Activated B cell treated with CpG ODN at 0.5 μM for 24 hours (primary cell): ENCODE measurements at regions of chr18 and their contacts with region 1.

Region 1: GRCh38 chr18:21194871-21195771 is 46.9 kb upstream of the GREB1L start:
- DNase-seq: no peak
- ATAC-seq: peak; percentile 28
- H3K4me3 Mint-ChIP-seq: no peak overlapping the region
- H3K27ac Mint-ChIP-seq: no peak overlapping the region
- H3K4me1 Mint-ChIP-seq: no peaks in the 10 kb centered on the region
- H3K27me3 Mint-ChIP-seq: peaks cover 8% of the 10 kb centered on the region
- CTCF ChIP-seq: peak; percentile 37

Region 2: GRCh38 chr18:21257386-21257785 is 62.3 kb after region 1 on chr18:
- CTCF ChIA-PET with region 1: no interaction called
- POLR2A ChIA-PET with region 1: no interaction called
- intact Hi-C with region 1: no loop called
- DNase-seq: no peak
- ATAC-seq: no peak
- H3K4me3 Mint-ChIP-seq: no peak overlapping the region
- H3K27ac Mint-ChIP-seq: no peak overlapping the region
- H3K4me1 Mint-ChIP-seq: no peaks in the 10 kb centered on the region
- H3K27me3 Mint-ChIP-seq: peaks cover 6% of the 10 kb centered on the region
- CTCF ChIP-seq: no peak

Region 3: GRCh38 chr18:21444465-21445023 is 249.4 kb after region 1 on chr18:
- CTCF ChIA-PET with region 1: interaction called, 8 read pairs
- POLR2A ChIA-PET with region 1: no interaction called
- intact Hi-C with region 1: loop called (anchors 2 kb)
- DNase-seq: no peak
- ATAC-seq: no peak
- H3K4me3 Mint-ChIP-seq: no peak overlapping the region
- H3K27ac Mint-ChIP-seq: no peak overlapping the region
- H3K4me1 Mint-ChIP-seq: no peaks in the 10 kb centered on the region
- H3K27me3 Mint-ChIP-seq: peaks cover 21% of the 10 kb centered on the region
- CTCF ChIP-seq: no peak

Region 4: DNA sequence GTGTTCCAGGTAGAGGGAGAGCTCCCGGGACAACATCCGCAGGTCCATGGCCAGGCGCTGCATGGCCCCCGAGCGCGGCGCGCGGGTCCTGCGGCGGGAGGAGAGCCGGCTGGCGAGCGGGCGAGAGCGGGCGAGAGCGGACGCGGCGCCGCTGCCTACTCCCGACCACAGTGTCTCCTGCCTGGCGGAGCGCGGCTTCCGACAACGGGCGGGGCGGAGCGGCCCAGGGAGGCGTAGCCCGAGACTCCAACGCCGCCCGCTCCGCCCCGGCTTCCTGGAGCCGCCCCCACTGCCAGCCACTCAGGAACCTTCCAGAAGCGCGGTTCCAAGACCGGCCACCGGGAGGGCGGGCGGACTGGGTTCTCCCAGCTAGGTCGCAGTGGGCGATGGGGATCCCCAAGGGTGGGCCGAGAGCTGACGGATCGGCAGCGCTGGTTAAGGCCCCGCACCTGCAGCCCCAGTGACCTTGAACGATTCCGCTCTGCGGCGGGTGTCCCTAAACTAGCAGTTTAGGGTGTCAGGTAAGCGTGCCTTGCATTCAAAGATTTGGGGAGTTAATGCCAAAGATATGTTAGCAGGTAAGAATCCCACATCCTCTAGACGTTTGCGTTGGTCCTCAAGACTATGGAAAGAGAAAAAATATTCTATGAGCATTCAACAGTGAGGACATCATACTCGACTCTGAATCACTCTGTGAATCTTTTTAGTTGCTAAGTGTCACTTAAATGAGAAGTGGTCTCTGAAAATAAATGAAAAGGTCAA is 509.7 kb after region 1 on chr18 and contains the start of gene ABHD3:
- CTCF ChIA-PET with region 1: no interaction called
- POLR2A ChIA-PET with region 1: no interaction called
- intact Hi-C with region 1: no loop called
- DNase-seq: peak; percentile 89
- ATAC-seq: peak; percentile 92
- H3K4me3 Mint-ChIP-seq: peak within 1 kb of the TSS; percentile 95
- H3K27ac Mint-ChIP-seq: peak within 1 kb of the TSS; percentile 94
- H3K4me1 Mint-ChIP-seq: peaks cover 25% of the 10 kb centered on the region
- H3K27me3 Mint-ChIP-seq: no peaks in the 10 kb centered on the region
- CTCF ChIP-seq: no peak
- total RNA-seq, gene ABHD3: 22.2 and 29.5 TPM in 2 replicates

Region 5: DNA sequence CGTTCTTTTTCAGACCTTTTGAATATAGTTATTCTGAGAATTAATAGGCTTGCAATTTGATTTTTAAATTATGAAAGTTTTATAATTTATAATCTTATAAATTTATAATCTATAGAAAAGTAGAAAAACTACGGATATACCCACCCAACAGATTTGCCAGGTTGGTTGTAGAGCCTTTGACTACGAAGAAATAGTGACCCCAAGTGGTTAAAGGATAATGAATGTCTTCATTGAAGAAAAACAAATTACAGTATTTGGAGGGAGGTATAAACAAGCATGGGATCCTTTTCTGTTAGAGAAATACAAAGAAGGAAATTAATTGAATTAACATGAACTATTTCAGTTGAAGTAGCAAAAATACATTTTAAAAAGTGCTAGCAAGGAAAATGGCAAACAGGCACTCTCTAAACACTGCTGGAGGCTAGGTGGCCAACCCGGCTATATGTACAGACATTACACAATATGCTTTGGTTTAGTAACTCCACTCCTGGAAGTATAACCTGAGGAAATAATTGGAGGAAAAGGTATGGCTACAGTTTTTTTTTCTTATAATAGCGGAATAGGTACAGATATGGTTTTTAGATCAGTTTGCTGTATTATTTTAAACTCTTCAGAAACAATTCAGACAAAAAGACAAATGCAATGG is 656.3 kb after region 1 on chr18:
- CTCF ChIA-PET with region 1: interaction called, 10 read pairs
- POLR2A ChIA-PET with region 1: no interaction called
- intact Hi-C with region 1: loop called (anchors 1 kb)
- DNase-seq: no peak
- ATAC-seq: no peak
- H3K4me3 Mint-ChIP-seq: no peak overlapping the region
- H3K27ac Mint-ChIP-seq: no peak overlapping the region
- H3K4me1 Mint-ChIP-seq: peaks cover 20% of the 10 kb centered on the region
- H3K27me3 Mint-ChIP-seq: no peaks in the 10 kb centered on the region
- CTCF ChIP-seq: no peak

Region 6: DNA sequence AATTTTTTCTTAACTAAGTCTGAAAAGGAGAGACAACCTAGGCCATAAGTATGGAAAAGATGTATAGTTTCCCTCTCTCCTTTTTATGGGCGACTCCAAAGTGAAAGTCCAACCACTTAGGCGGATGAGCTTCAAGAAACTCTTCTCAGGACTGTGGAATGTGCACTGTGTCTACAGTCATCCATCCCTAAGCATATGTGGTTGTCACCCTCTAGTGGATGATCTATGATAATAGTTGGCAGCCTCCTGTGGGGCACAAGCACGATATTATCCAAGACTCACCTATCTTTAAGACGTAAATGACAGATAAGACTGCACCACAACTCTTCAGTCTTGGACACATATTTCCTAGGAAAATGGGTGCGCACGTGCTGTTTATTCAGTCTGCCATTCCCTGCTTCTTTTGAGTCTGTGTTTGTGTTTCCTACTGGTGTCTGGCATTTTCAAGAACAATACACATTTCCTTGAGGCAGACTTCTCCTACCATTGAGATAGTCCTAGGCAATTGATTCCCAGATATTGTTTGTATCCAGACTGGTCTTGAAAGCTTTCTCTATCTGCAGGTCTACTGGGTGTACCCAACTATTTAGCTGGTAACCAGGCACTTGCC is 1368.1 kb after region 1 on chr18:
- CTCF ChIA-PET with region 1: no interaction called
- POLR2A ChIA-PET with region 1: no interaction called
- intact Hi-C with region 1: loop called (anchors 2 kb)
- DNase-seq: no peak
- ATAC-seq: no peak
- H3K4me3 Mint-ChIP-seq: no peak overlapping the region
- H3K27ac Mint-ChIP-seq: no peak overlapping the region
- H3K4me1 Mint-ChIP-seq: peaks cover 6% of the 10 kb centered on the region
- H3K27me3 Mint-ChIP-seq: peaks cover 31% of the 10 kb centered on the region
- CTCF ChIP-seq: no peak